Gastrocnemius medialis (tissue), 4 donors: ENCODE measurements at regions of chr11 and their contacts with region 1.

Region 1: DNA sequence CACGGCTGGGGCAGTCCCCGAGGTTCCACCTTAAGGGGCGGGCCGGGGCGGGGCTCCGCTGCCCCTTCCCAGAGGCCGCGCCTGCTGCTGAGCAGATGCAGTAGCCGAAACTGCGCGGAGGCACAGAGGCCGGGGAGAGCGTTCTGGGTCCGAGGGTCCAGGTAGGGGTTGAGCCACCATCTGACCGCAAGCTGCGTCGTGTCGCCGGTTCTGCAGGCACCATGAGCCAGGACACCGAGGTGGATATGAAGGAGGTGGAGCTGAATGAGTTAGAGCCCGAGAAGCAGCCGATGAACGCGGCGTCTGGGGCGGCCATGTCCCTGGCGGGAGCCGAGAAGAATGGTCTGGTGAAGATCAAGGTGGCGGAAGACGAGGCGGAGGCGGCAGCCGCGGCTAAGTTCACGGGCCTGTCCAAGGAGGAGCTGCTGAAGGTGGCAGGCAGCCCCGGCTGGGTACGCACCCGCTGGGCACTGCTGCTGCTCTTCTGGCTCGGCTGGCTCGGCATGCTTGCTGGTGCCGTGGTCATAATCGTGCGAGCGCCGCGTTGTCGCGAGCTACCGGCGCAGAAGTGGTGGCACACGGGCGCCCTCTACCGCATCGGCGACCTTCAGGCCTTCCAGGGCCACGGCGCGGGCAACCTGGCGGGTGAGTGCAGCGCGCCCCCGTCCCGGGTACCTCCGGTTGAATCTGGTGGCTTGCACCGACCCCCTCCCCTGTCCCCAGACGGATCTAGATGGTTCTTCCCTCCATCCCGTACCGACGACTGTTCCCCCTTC is at the start of gene SLC3A2:
- DNase-seq: peak; percentile 86 to 90
- ATAC-seq: peak; percentile 76 to 80
- H3K4me3 ChIP-seq: peak within 1 kb of the TSS; percentile 78 to 99 (median 97)
- H3K27ac ChIP-seq: peak within 1 kb of the TSS; percentile 96 to 100 (median 98)
- H3K4me1 ChIP-seq: peaks cover 36 to 39% of the 10 kb centered on the region in 2 donors
- H3K27me3 ChIP-seq: no peaks in the 10 kb centered on the region
- CTCF ChIP-seq: peak; percentile 43 to 81 (median 61)
- POLR2A ChIP-seq: peak; percentile 99
- total RNA-seq, gene SLC3A2: 158 to 278 (median 189) TPM

Region 2: DNA sequence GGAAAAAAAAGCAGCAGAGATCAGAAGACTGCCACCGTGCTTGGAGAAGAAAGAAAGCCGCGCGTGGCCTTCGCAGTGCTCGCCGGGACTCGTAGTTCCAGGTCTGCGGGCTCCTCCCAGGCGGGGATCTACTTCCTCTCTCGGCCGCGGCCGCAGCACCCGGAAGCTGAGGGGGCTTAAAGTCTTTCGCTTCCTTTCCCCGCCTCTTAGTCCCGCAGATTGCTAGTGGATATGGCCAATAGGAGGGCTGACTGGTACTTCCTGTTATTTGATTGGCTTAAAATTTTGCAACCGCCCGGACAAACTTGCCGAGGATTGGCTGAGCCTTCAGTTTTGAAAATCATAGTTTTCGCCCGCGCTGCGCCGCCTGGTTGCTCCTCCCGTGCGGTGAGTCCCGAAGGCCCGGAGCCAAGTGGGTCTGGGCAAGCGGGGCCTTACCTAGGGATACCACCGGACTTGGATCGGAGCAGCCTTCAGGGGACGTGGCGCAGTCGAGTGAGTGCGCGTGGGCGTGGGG is 757.3 kb before region 1 on chr11 and contains the start of gene INCENP:
- in situ Hi-C with region 1: loop called in 1 of 4 experiments (anchors 25 kb)
- intact Hi-C with region 1: no loop called
- DNase-seq: peak; percentile 96 to 97
- ATAC-seq: peak; percentile 100
- H3K4me3 ChIP-seq: peak within 1 kb of the TSS; percentile 81 to 85 (median 84)
- H3K27ac ChIP-seq: peak within 1 kb of the TSS; percentile 74 to 84 (median 82)
- H3K4me1 ChIP-seq: peaks cover 10 to 13% of the 10 kb centered on the region in 2 donors
- H3K27me3 ChIP-seq: no peaks in the 10 kb centered on the region
- CTCF ChIP-seq: peak in 1 of 5 experiments; percentile 21
- POLR2A ChIP-seq: peak in 1 of 2 donors; percentile 28
- total RNA-seq, gene INCENP: 6.3 to 18.7 (median 13.7) TPM

Region 3: GRCh38 chr11:62805076-62805892 is 75.7 kb before region 1 on chr11 and contains the start of gene NXF1:
- in situ Hi-C with region 1: no loop called
- intact Hi-C with region 1: loop called (anchors 1 kb)
- DNase-seq: peak; percentile 91 to 95
- ATAC-seq: peak; percentile 77 to 79
- H3K4me3 ChIP-seq: peak within 1 kb of the TSS; percentile 69 to 95 (median 78)
- H3K27ac ChIP-seq: peak within 1 kb of the TSS; percentile 91 to 98 (median 94)
- H3K4me1 ChIP-seq: peaks cover 24 to 28% of the 10 kb centered on the region in 2 donors
- H3K27me3 ChIP-seq: no peaks in the 10 kb centered on the region
- CTCF ChIP-seq: peak in 4 of 5 experiments; percentile 23 to 41 (median 38)
- POLR2A ChIP-seq: peak; percentile 100
- total RNA-seq, gene NXF1: 27.2 to 47.1 (median 46.1) TPM

Region 4: GRCh38 chr11:62841361-62842184 is 39.4 kb before region 1 on chr11:
- in situ Hi-C with region 1: no loop called
- intact Hi-C with region 1: loop called (anchors 1 kb)
- DNase-seq: peak; percentile 85 to 91
- ATAC-seq: peak; percentile 73 to 76
- H3K4me3 ChIP-seq: peak overlapping the region; percentile 82 to 100 (median 96)
- H3K27ac ChIP-seq: peak overlapping the region; percentile 97 to 99 (median 98)
- H3K4me1 ChIP-seq: peaks cover 20% of the 10 kb centered on the region in 2 donors
- H3K27me3 ChIP-seq: no peaks in the 10 kb centered on the region
- CTCF ChIP-seq: peak in 1 of 5 experiments; percentile 5
- POLR2A ChIP-seq: peak; percentile 99 to 100